ENCODE measurements at regions of chr10 and their contacts with region 1.

Region 1: GRCh38 chr10:1048732-1049424 is at the start of gene IDI1:
- DNase-seq: peak; percentile 96
- H3K4me3 ChIP-seq: peak within 1 kb of the TSS; percentile 91
- H3K27ac ChIP-seq: peak within 1 kb of the TSS; percentile 100
- H3K27me3 ChIP-seq: no peaks in the 10 kb centered on the region
- CTCF ChIP-seq: no peak
- polyA plus RNA-seq, gene IDI1: 29.4 and 37.6 TPM in 2 replicates

Region 2: DNA sequence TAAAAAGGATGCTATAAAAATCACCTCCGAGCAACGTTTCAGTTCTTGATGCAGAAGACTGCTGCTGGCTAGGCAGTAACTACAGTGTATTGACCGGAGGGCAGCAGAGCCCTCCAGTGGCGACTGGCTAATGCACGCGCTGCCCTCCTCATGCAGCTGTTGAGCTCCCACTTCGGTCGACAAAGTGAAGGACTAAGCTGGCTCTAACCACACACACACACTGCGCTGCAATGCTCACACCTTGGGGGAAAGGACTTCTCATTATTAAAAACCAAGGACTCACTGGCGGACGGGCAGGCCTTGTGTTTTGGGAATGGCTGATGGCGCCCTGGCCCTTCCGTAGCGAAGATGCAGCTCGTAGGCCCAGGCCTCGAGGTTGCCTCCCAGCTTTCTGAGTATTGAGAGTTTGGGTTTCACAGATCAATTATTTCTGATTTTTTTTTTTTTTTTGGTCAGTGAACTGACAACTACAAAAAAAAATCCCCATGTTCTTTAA is 238.5 kb before region 1 on chr10:
- CTCF ChIA-PET with region 1: no interaction called
- POLR2A ChIA-PET with region 1: no interaction called
- DNase-seq: no peak
- H3K4me3 ChIP-seq: no peak overlapping the region
- H3K27ac ChIP-seq: no peak overlapping the region
- H3K27me3 ChIP-seq: no peaks in the 10 kb centered on the region
- CTCF ChIP-seq: peak; percentile 48

Region 3: DNA sequence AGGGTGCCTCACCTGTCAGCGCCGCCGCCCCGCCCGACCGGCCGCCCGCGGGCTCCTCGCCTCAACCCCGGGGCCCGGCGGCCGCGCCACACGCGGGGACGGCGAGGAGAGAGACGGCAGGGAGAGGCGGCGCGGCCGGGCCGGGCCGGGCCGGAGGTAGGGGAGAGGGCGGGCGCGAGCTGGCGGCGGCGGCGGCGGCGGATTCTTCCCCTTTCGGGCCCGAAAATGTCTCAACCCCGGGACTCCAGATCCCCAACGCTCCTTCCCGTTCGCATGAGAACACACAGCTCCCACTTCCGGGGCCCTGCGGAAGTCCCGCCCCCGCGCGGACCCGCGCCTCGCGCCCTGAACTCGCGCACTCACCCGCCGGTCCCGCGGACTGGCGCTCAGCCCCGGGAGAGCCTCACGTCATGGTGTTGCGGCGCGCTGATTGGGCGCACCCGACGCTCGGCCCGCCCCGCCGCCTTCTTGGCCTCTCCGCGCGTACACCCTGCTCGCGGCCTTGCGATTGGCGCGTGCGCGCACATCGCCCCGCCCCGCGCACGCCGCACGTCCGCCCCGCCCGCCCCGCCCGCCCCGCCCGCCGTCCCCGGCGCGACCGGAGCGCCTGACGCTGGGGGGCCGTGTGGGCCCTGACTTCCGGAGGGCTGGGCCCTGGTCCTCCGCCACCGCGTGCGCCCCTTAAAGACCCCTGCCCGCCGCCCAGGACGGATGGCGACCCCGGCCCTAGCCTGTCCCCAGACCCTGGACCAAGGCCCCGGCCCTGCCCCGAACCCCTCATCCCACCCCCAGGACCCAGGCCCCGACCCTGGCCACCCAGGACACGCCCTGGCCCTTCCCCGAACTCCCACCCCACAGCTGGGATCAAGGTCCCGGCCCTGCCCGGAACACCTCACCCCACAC is 117.2 kb before region 1 on chr10 and contains the start of gene LARP4B:
- CTCF ChIA-PET with region 1: no interaction called
- POLR2A ChIA-PET with region 1: no interaction called
- DNase-seq: peak; percentile 94
- H3K4me3 ChIP-seq: peak within 1 kb of the TSS; percentile 85
- H3K27ac ChIP-seq: peak within 1 kb of the TSS; percentile 68
- H3K27me3 ChIP-seq: no peaks in the 10 kb centered on the region
- CTCF ChIP-seq: no peak
- polyA plus RNA-seq, gene LARP4B: 33.5 and 34.0 TPM in 2 replicates

Region 4: DNA sequence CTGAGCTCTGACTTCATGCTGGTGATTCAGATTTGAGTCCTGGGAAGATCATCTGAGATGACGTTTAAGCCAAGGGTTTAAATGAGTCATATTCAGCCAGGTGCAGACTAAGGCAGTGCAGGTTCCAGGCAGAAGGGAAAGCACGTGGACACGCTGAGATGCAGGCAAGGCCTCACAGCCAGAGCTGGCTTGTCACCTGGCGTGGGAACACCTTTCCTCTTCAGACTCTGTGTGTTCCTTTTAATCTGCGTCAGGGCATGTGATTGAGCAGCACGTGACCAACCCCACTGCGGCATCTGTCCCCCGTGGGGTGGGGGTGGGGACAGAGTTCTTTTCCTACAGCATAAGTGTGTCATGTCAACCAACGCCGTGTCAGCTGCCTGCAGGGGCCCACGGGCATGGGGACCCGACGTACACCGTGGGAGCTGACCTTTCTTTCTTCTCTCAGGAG is 12.5 kb before region 1 on chr10:
- CTCF ChIA-PET with region 1: no interaction called
- POLR2A ChIA-PET with region 1: interaction called, 10 read pairs
- DNase-seq: peak; percentile 51
- H3K4me3 ChIP-seq: no peak overlapping the region
- H3K27ac ChIP-seq: peak overlapping the region; percentile 31
- H3K27me3 ChIP-seq: no peaks in the 10 kb centered on the region
- CTCF ChIP-seq: no peak